ENCODE measurements at regions of chr3 and their contacts with region 1.

Region 1: DNA sequence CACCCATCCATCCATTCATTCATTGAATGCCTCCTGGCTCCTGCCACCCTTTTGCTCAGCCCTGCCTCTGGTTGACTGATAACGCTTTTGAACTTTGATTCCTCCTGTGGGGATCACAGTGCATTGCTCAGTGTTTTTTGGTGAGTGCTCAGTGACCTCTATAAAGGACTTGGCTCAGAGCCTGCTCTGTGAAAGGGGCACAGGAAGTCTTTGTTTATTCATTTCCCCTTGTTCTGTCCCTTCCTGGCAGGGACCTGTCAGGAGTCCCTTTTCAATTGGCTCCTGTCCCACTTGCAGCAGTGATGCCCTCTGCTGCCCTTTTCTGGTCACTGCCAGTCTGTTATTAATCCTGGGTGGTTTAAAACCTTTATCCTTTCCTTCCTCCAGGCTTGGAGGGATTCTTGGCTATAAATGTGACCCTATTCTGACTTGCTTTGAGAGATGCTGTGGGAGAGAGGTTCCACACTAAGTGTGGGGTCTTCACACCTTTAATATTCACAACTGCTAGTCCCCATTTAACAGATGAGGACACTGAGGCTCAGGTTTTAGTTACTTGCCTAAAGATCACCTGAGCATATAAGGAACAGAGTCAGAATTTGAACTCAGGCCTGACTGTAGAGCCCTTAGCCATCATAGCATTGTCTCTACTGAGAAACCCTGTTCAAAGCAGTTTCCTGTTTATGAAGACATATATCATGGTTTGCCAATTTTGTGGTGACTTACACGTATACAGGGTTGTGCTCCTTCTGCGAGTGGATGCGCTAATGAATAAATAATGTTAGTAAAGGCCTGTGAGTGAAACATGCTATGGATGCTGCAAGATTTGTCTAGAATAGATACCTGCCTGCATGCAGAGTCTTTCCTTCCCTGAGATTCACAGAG is 23.2 kb upstream of the TATDN2 start:
- DNase-seq: peak; percentile 71
- ATAC-seq: peak; percentile 87
- H3K4me3 ChIP-seq: no peak overlapping the region
- H3K27ac ChIP-seq: no peak overlapping the region
- H3K4me1 ChIP-seq: peaks cover 29 to 42% of the 10 kb centered on the region in 2 experiments
- H3K27me3 ChIP-seq: no peaks in the 10 kb centered on the region
- CTCF ChIP-seq: peak; percentile 80 to 90 (median 89)
- POLR2A ChIP-seq: no peak
- RAD21 ChIP-seq: peak; percentile 98

Region 2: GRCh38 chr3:9946112-9947024 is 278.7 kb before region 1 on chr3:
- CTCF ChIA-PET with region 1: interaction called, 6 read pairs
- POLR2A ChIA-PET with region 1: no interaction called
- RAD21 ChIA-PET with region 1: no interaction called
- intact Hi-C with region 1: loop called (anchors 10 kb)
- DNase-seq: peak; percentile 80
- ATAC-seq: peak; percentile 75
- H3K4me3 ChIP-seq: peak overlapping the region; percentile 66 to 84
- H3K27ac ChIP-seq: peak overlapping the region; percentile 98
- H3K4me1 ChIP-seq: peaks cover 7 to 28% of the 10 kb centered on the region in 2 experiments; a peak in 3 of 4 replicates
- H3K27me3 ChIP-seq: no peaks in the 10 kb centered on the region
- CTCF ChIP-seq: peak in 2 of 3 experiments; percentile 59 to 89; a peak in 4 of 6 replicates
- POLR2A ChIP-seq: peak; percentile 92
- RAD21 ChIP-seq: no peak

Region 3: GRCh38 chr3:10026084-10026890 is 198.7 kb before region 1 on chr3 and contains the start of gene FANCD2:
- CTCF ChIA-PET with region 1: no interaction called
- POLR2A ChIA-PET with region 1: no interaction called
- RAD21 ChIA-PET with region 1: interaction called in 1 of 2 experiments, 10 read pairs
- intact Hi-C with region 1: no loop called
- DNase-seq: peak; percentile 73
- ATAC-seq: peak; percentile 88
- H3K4me3 ChIP-seq: peak within 1 kb of the TSS; percentile 97
- H3K27ac ChIP-seq: peak within 1 kb of the TSS; percentile 64
- H3K4me1 ChIP-seq: peaks cover 8 to 17% of the 10 kb centered on the region in 2 experiments
- H3K27me3 ChIP-seq: no peaks in the 10 kb centered on the region
- CTCF ChIP-seq: no peak
- POLR2A ChIP-seq: peak; percentile 58
- RAD21 ChIP-seq: 0 out of 2 replicates have a peak, but pooled peaks have one; percentile 25
- total RNA-seq, gene FANCD2: 50.0 TPM

Region 4: GRCh38 chr3:10142707-10143566 is 82.1 kb before region 1 on chr3:
- CTCF ChIA-PET with region 1: no interaction called
- POLR2A ChIA-PET with region 1: no interaction called
- RAD21 ChIA-PET with region 1: no interaction called
- intact Hi-C with region 1: loop called (anchors 1 kb)
- DNase-seq: no peak
- ATAC-seq: peak; percentile 6; the same call in 1 of the 2 replicates
- H3K4me3 ChIP-seq: peak overlapping the region; percentile 92 to 99
- H3K27ac ChIP-seq: peak overlapping the region; percentile 91
- H3K4me1 ChIP-seq: peaks cover 4 to 22% of the 10 kb centered on the region in 2 experiments; a peak in 3 of 4 replicates
- H3K27me3 ChIP-seq: no peaks in the 10 kb centered on the region
- CTCF ChIP-seq: no peak
- POLR2A ChIP-seq: no peak
- RAD21 ChIP-seq: no peak

Region 5: GRCh38 chr3:10945683-10946287 is 720.8 kb after region 1 on chr3:
- CTCF ChIA-PET with region 1: no interaction called
- POLR2A ChIA-PET with region 1: no interaction called
- RAD21 ChIA-PET with region 1: no interaction called
- intact Hi-C with region 1: no loop called
- DNase-seq: peak; percentile 44
- ATAC-seq: peak; percentile 99
- H3K4me3 ChIP-seq: no peak overlapping the region
- H3K27ac ChIP-seq: no peak overlapping the region
- H3K4me1 ChIP-seq: no peaks in the 10 kb centered on the region
- H3K27me3 ChIP-seq: no peaks in the 10 kb centered on the region; the same call in 1 of the 2 replicates
- CTCF ChIP-seq: peak; percentile 79 to 96 (median 88)
- POLR2A ChIP-seq: no peak
- RAD21 ChIP-seq: peak; percentile 83

Measured in HCT116 (cell line).